ENCODE measurements at regions of chr5 and their contacts with region 1.

Region 1: GRCh38 chr5:132386644-132387286 is 17.3 kb downstream of the SLC22A5 start:
- H3K4me3 Mint-ChIP-seq: no peak overlapping the region
- H3K27ac Mint-ChIP-seq: peak overlapping the region; percentile 88
- H3K4me1 Mint-ChIP-seq: peaks cover 53% of the 10 kb centered on the region
- H3K27me3 Mint-ChIP-seq: no peaks in the 10 kb centered on the region

Region 2: DNA sequence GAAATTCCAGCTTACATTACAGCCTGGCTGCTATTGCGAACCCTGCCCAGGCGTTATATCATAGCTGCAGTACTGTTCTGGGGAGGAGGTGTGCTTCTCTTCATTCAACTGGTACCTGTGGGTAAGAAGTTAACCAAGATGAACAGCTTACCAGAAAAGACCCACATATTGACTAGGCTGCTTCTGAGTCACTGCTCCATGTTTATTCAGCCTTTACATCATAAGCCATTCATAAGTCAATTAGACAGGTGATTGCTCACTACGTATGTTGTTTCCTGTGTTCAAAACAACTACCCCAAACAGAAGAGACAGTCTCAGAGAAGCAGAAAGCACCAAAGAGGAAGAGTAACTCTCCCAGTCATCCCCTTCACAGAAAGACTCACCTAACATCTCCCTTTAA is 52.0 kb before region 1 on chr5:
- intact Hi-C with region 1: no loop called
- H3K4me3 Mint-ChIP-seq: no peak overlapping the region
- H3K27ac Mint-ChIP-seq: no peak overlapping the region
- H3K4me1 Mint-ChIP-seq: no peaks in the 10 kb centered on the region
- H3K27me3 Mint-ChIP-seq: no peaks in the 10 kb centered on the region

Region 3: GRCh38 chr5:132410451-132411381 is 24.0 kb after region 1 on chr5:
- intact Hi-C with region 1: loop called (anchors 1 kb)
- H3K4me3 Mint-ChIP-seq: peak overlapping the region; percentile 83
- H3K27ac Mint-ChIP-seq: peak overlapping the region; percentile 94
- H3K4me1 Mint-ChIP-seq: peaks cover 53% of the 10 kb centered on the region
- H3K27me3 Mint-ChIP-seq: no peaks in the 10 kb centered on the region

Region 4: DNA sequence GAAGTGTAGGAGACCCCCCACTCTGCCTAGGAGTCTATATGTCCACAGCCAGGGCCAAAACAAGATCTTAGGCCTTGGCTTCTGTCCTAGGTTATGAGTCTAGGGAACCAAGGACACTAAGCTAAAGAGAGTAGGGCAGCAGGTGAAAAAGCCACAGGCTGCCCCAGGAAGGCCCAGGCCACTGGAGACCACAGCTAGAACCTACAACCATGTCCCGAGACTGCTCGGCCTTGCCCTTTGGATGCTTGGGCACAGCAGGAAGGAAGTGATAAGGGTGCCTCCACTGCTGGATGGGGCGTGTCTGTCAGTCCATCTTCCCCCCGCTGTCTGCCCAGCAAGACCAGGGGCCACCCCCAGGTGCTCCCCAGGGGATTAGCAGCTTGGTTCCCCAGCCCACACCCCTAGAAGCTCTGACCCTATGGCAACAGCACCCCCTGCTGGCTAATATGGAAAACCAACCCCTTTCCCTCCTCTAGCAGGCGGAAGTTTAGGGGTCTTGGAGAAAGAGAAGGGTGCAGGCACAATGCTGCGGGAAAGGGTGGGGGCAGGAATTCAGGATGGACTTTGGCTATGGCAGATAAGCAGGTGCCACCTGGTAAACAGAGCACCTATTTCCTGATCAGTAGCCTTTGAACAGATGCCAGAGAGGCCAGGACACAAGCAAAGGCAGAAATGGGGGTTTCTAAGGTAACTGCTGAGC is 114.3 kb after region 1 on chr5:
- intact Hi-C with region 1: loop called (anchors 1 kb)
- H3K4me3 Mint-ChIP-seq: no peak overlapping the region
- H3K27ac Mint-ChIP-seq: peak overlapping the region; percentile 46
- H3K4me1 Mint-ChIP-seq: peaks cover 44% of the 10 kb centered on the region
- H3K27me3 Mint-ChIP-seq: no peaks in the 10 kb centered on the region

Region 5: DNA sequence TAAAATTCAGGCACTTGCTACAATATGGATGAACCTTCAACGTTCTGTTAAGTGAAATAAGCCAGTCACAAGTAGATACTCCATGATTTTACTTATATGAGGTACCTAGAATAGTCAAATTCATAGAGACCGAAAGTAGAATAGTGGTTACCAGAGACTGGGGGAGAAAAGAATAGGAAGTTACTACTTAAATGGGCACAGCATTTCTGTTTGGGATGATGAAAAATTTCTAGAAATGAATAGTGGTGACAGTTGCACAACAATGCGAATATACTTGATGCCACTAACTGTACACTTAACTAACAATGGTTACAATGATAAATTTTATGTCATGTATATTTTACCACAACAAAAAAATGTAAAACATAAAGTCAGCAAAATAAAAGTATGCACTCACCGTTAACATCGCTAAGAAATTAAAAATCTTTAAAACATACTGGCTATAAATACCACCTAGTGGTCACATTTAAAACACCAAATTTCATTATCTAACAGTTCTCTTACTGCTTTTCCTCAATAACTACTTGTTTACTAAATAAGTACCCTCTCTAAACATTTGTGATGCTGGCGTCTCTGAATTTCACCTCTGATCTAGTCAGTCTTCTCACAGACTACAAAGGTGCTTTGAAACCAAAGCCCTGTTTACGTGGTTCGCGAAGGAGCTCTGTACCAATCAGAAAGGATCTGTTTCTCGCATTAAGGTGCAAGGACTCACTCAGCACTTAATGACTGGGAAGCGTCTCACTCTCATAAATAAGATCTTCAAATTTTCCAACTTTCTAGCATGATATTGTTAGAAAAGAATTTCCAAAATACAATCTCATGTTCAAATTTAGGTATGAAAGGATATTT is 327.9 kb after region 1 on chr5:
- intact Hi-C with region 1: loop called (anchors 5 kb)
- H3K4me3 Mint-ChIP-seq: no peak overlapping the region
- H3K27ac Mint-ChIP-seq: no peak overlapping the region
- H3K4me1 Mint-ChIP-seq: no peaks in the 10 kb centered on the region
- H3K27me3 Mint-ChIP-seq: no peaks in the 10 kb centered on the region

Region 6: GRCh38 chr5:132820162-132820754 is 433.5 kb after region 1 on chr5:
- intact Hi-C with region 1: loop called (anchors 1 kb)
- H3K4me3 Mint-ChIP-seq: peak overlapping the region; percentile 14
- H3K27ac Mint-ChIP-seq: no peak overlapping the region
- H3K4me1 Mint-ChIP-seq: peaks cover 21% of the 10 kb centered on the region
- H3K27me3 Mint-ChIP-seq: peaks cover 71% of the 10 kb centered on the region

Region 7: GRCh38 chr5:132883261-132883834 is 496.6 kb after region 1 on chr5:
- intact Hi-C with region 1: loop called (anchors 5 kb)
- H3K4me3 Mint-ChIP-seq: no peak overlapping the region
- H3K27ac Mint-ChIP-seq: no peak overlapping the region
- H3K4me1 Mint-ChIP-seq: peaks cover 23% of the 10 kb centered on the region
- H3K27me3 Mint-ChIP-seq: no peaks in the 10 kb centered on the region